ENCODE measurements at regions of chr20 and their contacts with region 1.

Region 1: GRCh38 chr20:64057628-64058498 is 5.1 kb upstream of the TCEA2 start:
- DNase-seq: peak; percentile 40
- ATAC-seq: peak; percentile 71
- H3K4me3 ChIP-seq: no peak overlapping the region
- H3K27ac ChIP-seq: no peak overlapping the region
- H3K4me1 ChIP-seq: peaks cover 11% of the 10 kb centered on the region
- H3K27me3 ChIP-seq: peaks cover 2% of the 10 kb centered on the region; the same call in 1 of the 2 replicates
- CTCF ChIP-seq: peak; percentile 77
- POLR2A ChIP-seq: no peak
- RAD21 ChIP-seq: peak; percentile 66

Region 2: GRCh38 chr20:63714858-63715257 is 343.0 kb before region 1 on chr20:
- CTCF ChIA-PET with region 1: no interaction called
- POLR2A ChIA-PET with region 1: no interaction called
- dilution Hi-C with region 1: no loop called
- in situ Hi-C with region 1: no loop called
- intact Hi-C with region 1: no loop called
- DNase-seq: no peak
- ATAC-seq: no peak
- H3K4me3 ChIP-seq: no peak overlapping the region
- H3K27ac ChIP-seq: no peak overlapping the region
- H3K4me1 ChIP-seq: no peaks in the 10 kb centered on the region
- H3K27me3 ChIP-seq: no peaks in the 10 kb centered on the region
- CTCF ChIP-seq: no peak
- POLR2A ChIP-seq: no peak
- RAD21 ChIP-seq: no peak

Region 3: GRCh38 chr20:63896264-63897105 is 161.4 kb before region 1 on chr20:
- CTCF ChIA-PET with region 1: no interaction called
- POLR2A ChIA-PET with region 1: no interaction called
- dilution Hi-C with region 1: no loop called
- in situ Hi-C with region 1: no loop called
- intact Hi-C with region 1: loop called (anchors 2 kb)
- DNase-seq: peak; percentile 46
- ATAC-seq: peak; percentile 3
- H3K4me3 ChIP-seq: peak overlapping the region; percentile 86
- H3K27ac ChIP-seq: peak overlapping the region; percentile 51
- H3K4me1 ChIP-seq: peaks cover 14% of the 10 kb centered on the region
- H3K27me3 ChIP-seq: no peaks in the 10 kb centered on the region
- CTCF ChIP-seq: no peak
- POLR2A ChIP-seq: no peak
- RAD21 ChIP-seq: no peak

Region 4: DNA sequence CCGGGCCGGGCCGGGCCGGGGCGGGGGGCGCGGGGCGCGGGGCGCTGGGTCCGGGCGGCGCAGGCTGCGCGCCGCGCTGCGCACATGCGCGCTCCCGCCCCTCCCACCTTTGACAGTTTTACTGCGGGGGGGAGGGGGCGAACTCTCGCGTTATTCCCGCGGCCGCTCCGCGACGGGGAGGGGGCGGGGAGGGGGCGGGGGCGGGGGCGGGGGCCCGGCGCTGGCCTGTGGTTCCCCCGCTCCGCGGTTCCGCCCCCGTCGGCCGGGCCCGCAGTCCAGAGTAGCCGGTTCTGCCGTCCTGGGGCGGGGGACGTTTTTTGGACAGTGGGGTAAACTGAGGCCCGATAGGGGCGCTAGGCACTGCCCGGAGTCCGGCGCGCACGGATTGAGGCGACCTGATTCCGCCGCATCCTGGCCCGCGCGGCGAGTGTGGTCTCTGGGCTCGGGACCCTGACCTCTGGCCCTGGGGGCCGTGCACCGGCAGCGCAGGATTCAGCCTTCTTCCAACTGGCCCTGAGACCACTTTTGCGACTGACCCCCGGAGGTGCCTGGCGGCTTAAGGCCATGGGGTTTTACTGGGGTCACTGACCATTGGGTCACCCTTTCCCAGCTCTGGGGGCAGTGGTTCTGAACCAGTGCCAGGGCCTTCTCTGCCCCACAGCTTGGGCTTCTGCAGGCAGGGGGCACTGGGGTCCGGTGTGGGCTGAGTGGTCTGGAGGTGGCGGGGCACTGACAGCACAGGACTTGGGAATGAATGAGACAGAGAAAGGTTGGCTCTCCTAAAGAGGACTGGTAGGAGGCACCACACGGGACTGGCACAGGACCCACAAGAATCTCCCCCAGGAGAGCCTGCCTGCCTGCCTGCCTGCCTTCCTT is 87.8 kb before region 1 on chr20 and contains the start of gene ZNF512B:
- CTCF ChIA-PET with region 1: no interaction called
- POLR2A ChIA-PET with region 1: no interaction called
- dilution Hi-C with region 1: no loop called
- in situ Hi-C with region 1: no loop called
- intact Hi-C with region 1: no loop called
- DNase-seq: peak; percentile 50
- ATAC-seq: peak; percentile 71
- H3K4me3 ChIP-seq: peak within 1 kb of the TSS; percentile 92
- H3K27ac ChIP-seq: peak within 1 kb of the TSS; percentile 34
- H3K4me1 ChIP-seq: peaks cover 17% of the 10 kb centered on the region
- H3K27me3 ChIP-seq: no peaks in the 10 kb centered on the region
- CTCF ChIP-seq: no peak
- POLR2A ChIP-seq: no peak
- RAD21 ChIP-seq: no peak
- total RNA-seq, gene ZNF512B: 6.4 and 6.5 TPM in 2 replicates

Region 5: DNA sequence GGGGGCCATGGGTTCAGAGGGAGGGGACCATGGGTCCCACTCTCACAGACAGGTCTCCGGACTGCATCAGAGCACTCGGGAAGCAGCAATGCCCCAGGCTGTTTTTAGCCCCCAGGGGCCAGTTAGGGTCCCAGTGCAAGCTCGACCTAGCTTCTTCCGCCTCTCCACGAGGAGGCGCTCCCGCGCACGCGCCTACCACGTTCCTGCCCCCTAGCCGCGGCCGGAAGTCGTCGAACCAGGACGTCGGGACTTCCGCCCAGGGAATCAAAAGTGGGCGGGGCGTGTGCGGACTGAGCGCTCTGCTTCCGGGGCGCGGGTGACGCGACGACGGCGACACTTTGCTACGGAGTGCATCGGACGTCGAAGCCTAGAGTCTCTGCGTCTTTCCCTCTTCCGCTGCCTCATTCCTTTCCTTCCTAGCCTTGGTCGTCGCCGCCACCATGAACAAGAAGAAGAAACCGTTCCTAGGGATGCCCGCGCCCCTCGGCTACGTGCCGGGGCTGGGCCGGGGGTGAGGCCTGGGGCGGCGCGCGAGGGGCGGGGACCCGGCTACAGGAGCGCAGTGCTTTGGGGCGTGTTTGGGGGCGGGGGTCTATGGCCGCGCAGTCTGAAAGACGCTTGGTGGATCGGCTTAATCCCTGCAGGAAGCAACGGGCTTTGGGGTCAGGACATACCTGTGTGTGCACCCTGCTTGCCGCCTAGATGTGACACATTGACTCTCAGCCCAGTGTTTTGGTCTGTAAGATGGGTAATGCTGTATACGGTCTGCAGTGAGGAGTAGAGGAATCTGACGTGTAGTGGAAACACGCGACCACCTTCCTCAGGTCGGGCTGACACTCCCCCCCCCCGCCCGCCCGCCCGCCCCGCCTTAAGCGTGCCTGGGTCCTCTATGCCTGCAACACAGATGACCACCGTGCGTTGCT is 76.8 kb before region 1 on chr20 and contains the start of gene PRPF6:
- CTCF ChIA-PET with region 1: interaction called, 3 read pairs
- POLR2A ChIA-PET with region 1: no interaction called
- dilution Hi-C with region 1: no loop called
- in situ Hi-C with region 1: no loop called
- intact Hi-C with region 1: loop called (anchors 2 kb)
- DNase-seq: peak; percentile 92
- ATAC-seq: peak; percentile 74
- H3K4me3 ChIP-seq: peak within 1 kb of the TSS; percentile 91
- H3K27ac ChIP-seq: peak within 1 kb of the TSS; percentile 82
- H3K4me1 ChIP-seq: peaks cover 26% of the 10 kb centered on the region
- H3K27me3 ChIP-seq: no peaks in the 10 kb centered on the region
- CTCF ChIP-seq: peak; percentile 97
- POLR2A ChIP-seq: peak; percentile 80
- RAD21 ChIP-seq: peak; percentile 43
- total RNA-seq, gene PRPF6: 68.6 and 71.3 TPM in 2 replicates

Region 6: GRCh38 chr20:64038565-64039292 is 19.1 kb before region 1 on chr20:
- CTCF ChIA-PET with region 1: no interaction called
- POLR2A ChIA-PET with region 1: no interaction called
- dilution Hi-C with region 1: no loop called
- in situ Hi-C with region 1: no loop called
- intact Hi-C with region 1: loop called (anchors 2 kb)
- DNase-seq: peak; percentile 67
- ATAC-seq: peak; percentile 87
- H3K4me3 ChIP-seq: peak overlapping the region; percentile 32
- H3K27ac ChIP-seq: no peak overlapping the region
- H3K4me1 ChIP-seq: peaks cover 5% of the 10 kb centered on the region; the same call in 1 of the 2 replicates
- H3K27me3 ChIP-seq: peaks cover 46% of the 10 kb centered on the region
- CTCF ChIP-seq: peak; percentile 69
- POLR2A ChIP-seq: no peak
- RAD21 ChIP-seq: peak; percentile 62

Measured in IMR-90 (cell line).